Naive thymus-derived CD4-positive, alpha-beta T cell (primary cell): ENCODE measurements at regions of chr10 and their contacts with region 1.

Region 1: GRCh38 chr10:115727129-115727528 is 545.9 kb downstream of the GFRA1 start:
- DNase-seq: no peak
- ATAC-seq: no peak
- H3K4me3 ChIP-seq: no peak overlapping the region
- H3K4me3 Mint-ChIP-seq: no peak overlapping the region
- H3K27ac ChIP-seq: no peak overlapping the region
- H3K27ac Mint-ChIP-seq: no peak overlapping the region
- H3K4me1 ChIP-seq: no peaks in the 10 kb centered on the region
- H3K4me1 Mint-ChIP-seq: no peaks in the 10 kb centered on the region
- H3K27me3 ChIP-seq: no peaks in the 10 kb centered on the region
- H3K27me3 Mint-ChIP-seq: no peaks in the 10 kb centered on the region

Region 2: DNA sequence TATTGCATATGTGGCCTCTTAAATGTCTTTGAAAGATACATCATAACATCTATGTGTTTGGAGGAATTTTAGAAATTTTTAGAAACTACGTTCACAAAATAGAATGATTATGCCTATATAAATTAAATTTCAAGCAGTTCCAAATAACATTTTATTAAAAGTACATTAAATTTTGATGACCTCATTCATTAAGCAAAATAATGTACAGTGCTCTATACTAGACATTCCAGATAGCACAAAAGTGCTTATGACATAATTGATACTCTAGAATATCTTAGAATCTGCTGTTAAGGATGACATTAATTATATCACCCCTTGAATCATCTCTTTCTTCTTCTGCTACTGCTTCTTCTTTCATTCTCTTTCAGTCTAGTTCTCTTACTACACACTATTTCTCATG is 17.0 kb after region 1 on chr10:
- CTCF ChIA-PET with region 1: no interaction called
- POLR2A ChIA-PET with region 1: no interaction called
- intact Hi-C with region 1: loop called in 1 of 2 experiments (anchors 1 kb)
- DNase-seq: no peak
- ATAC-seq: no peak
- H3K4me3 ChIP-seq: no peak overlapping the region
- H3K4me3 Mint-ChIP-seq: no peak overlapping the region
- H3K27ac ChIP-seq: no peak overlapping the region
- H3K27ac Mint-ChIP-seq: no peak overlapping the region
- H3K4me1 ChIP-seq: no peaks in the 10 kb centered on the region
- H3K4me1 Mint-ChIP-seq: peaks cover 0 to 1% (median 0%) of the 10 kb centered on the region in 7 donors
- H3K27me3 ChIP-seq: no peaks in the 10 kb centered on the region
- H3K27me3 Mint-ChIP-seq: no peaks in the 10 kb centered on the region